Calu3 (cell line): ENCODE measurements at regions of chr18 and their contacts with region 1.

Region 1: DNA sequence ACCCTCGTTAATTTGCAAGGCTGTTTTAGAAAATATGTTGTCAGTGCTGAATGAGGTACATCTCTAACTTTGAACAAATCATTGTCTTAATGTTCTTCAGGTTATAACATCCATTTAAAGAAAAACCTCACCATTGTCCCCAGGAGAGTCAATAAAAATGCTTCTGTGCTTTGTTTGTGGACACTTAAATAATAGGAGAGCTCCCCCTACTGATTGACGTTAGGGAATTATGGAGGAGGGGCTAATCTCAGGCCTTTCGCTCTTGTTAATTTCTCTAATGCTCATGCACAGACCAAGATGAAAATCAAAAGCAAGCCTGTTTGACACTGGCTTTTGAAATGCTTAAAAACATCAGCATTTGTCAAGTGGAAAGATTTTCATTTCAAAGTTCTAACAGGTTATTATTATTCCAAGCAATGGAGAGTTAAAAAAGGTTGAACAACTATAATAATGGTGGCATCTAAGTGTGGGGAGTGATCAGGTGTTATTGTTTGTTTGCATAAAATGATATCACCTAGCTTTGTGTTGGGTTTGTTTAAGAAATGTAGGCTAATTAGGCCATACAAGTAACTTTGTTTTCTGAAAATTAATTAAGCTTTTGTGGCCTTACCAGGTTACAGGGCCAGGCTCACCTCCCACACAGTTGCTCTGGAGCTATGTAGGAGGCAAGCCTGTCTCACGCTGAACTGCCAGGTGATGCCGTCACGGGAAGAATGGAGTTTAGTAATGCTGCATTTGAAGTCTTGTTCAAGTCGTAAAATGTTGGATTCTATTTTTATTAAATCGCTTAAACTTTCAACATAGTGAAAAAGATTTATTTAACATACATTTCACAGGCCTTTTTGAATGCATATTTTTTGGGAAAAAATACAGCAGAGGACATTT is 51.7 kb upstream of the SMIM21 start:
- DNase-seq: peak; percentile 13
- H3K4me3 Mint-ChIP-seq: no peak overlapping the region
- H3K27ac Mint-ChIP-seq: no peak overlapping the region
- H3K4me1 Mint-ChIP-seq: no peaks in the 10 kb centered on the region
- H3K27me3 Mint-ChIP-seq: no peaks in the 10 kb centered on the region
- CTCF ChIP-seq: peak; percentile 10

Region 2: DNA sequence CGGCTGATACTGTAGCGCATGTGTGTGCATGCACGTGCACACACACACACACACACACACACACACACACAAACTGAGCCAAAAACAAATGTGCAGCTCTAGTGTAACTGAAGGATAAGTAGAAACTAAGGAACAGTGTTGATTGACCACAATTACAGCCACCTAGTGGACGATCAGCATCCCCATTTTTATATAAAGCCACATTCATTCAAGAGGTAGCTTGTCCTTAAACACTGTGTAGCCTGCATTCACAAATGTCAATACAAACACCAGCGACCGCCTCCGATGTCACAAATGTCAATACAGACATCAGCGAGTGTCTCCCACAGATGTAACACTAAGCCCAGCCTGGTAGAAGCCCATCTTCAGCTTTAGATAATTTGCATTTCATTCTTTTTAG is 437.7 kb before region 1 on chr18:
- CTCF ChIA-PET with region 1: interaction called, 3 read pairs
- intact Hi-C with region 1: loop called (anchors 10 kb)
- DNase-seq: no peak
- H3K4me3 Mint-ChIP-seq: no peak overlapping the region
- H3K27ac Mint-ChIP-seq: no peak overlapping the region
- H3K4me1 Mint-ChIP-seq: no peaks in the 10 kb centered on the region
- H3K27me3 Mint-ChIP-seq: no peaks in the 10 kb centered on the region
- CTCF ChIP-seq: peak; percentile 40

Region 3: DNA sequence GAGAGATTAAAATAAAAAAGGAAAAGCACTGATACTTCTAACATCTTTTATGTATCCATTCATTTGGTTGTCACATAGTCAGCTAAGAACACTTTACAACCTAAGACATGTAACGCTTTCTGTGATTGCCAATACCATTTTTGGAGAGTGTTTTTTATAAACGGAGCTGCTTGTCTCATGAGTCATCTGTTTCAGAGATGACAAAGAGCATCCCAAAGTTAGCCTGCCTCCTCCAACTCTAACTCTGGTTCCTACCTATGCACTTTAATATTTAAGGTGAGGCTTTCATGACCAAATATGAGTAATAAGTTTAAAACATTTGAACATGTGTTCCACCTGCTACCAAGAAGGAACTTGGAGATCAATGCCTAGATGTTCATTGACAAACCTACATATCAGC is 208.4 kb after region 1 on chr18:
- CTCF ChIA-PET with region 1: no interaction called
- intact Hi-C with region 1: no loop called
- DNase-seq: no peak
- H3K4me3 Mint-ChIP-seq: no peak overlapping the region
- H3K27ac Mint-ChIP-seq: no peak overlapping the region
- H3K4me1 Mint-ChIP-seq: no peaks in the 10 kb centered on the region
- H3K27me3 Mint-ChIP-seq: no peaks in the 10 kb centered on the region
- CTCF ChIP-seq: no peak